CD14-positive monocyte (primary cell): ENCODE measurements at regions of chr3 and their contacts with region 1.

Region 1: DNA sequence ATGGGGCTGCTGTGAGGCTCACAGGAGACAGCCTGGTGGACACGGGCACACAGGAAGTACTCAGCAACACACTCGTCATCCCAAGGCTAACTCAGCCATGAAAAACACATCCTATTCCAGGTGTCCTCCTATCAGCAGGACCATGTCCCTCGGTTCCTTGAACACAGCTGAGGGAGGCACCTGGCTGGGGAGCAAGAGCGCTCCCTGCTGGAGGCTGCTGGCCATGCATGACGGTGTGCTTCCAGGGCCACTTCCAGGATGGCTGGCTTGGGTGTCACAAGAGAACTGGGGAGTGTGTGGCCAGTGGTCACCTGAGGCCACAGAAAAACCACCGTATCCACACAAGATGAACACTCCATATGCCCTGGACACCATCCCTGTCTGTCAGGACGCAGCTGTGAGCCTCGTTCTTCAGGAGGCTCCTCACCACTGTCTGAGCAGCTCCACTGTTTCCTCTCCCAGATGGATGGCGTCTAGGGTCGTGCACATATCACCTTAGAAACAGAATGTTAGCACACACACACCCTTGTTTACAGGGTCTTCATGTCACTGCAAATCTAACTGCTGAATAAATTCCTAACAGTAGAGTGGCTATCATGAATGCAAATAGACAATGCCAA is 31.0 kb downstream of the POC1A start:
- DNase-seq: peak; percentile 66 to 78 (median 73)
- H3K4me3 ChIP-seq: peak overlapping the region in 1 of 3 experiments; percentile 61
- H3K4me3 Mint-ChIP-seq: no peak overlapping the region
- H3K27ac ChIP-seq: peak overlapping the region in 1 of 2 donors; percentile 85
- H3K27ac Mint-ChIP-seq: peak overlapping the region in 5 of 7 donors; percentile 49 to 94 (median 82)
- H3K4me1 ChIP-seq: peaks cover 55 to 57% of the 10 kb centered on the region in 2 donors
- H3K4me1 Mint-ChIP-seq: peaks cover 57% of the 10 kb centered on the region
- H3K27me3 ChIP-seq: no peaks in the 10 kb centered on the region
- H3K27me3 Mint-ChIP-seq: no peaks in the 10 kb centered on the region
- CTCF ChIP-seq: peak; percentile 96

Region 2: GRCh38 chr3:52001443-52001974 is 121.7 kb before region 1 on chr3:
- intact Hi-C with region 1: loop called (anchors 1 to 2 kb)
- DNase-seq: peak; percentile 46 to 69 (median 61)
- H3K4me3 ChIP-seq: no peak overlapping the region
- H3K4me3 Mint-ChIP-seq: no peak overlapping the region
- H3K27ac ChIP-seq: no peak overlapping the region
- H3K27ac Mint-ChIP-seq: no peak overlapping the region
- H3K4me1 ChIP-seq: peaks cover 18 to 22% of the 10 kb centered on the region in 2 donors
- H3K4me1 Mint-ChIP-seq: peaks cover 19% of the 10 kb centered on the region
- H3K27me3 ChIP-seq: no peaks in the 10 kb centered on the region
- H3K27me3 Mint-ChIP-seq: peaks cover 2 to 7% (median 6%) of the 10 kb centered on the region in 3 donors
- CTCF ChIP-seq: peak; percentile 95

Region 3: GRCh38 chr3:52062499-52062898 is 60.7 kb before region 1 on chr3:
- intact Hi-C with region 1: loop called (anchors 2 to 5 kb)
- DNase-seq: peak; percentile 95 to 99 (median 97)
- H3K4me3 ChIP-seq: peak overlapping the region in 1 of 3 experiments; percentile 45
- H3K4me3 Mint-ChIP-seq: peak overlapping the region in 1 of 2 donors; percentile 51
- H3K27ac ChIP-seq: peak overlapping the region; percentile 83 to 84
- H3K27ac Mint-ChIP-seq: peak overlapping the region; percentile 87 to 97 (median 93)
- H3K4me1 ChIP-seq: peaks cover 50 to 59% of the 10 kb centered on the region in 2 donors
- H3K4me1 Mint-ChIP-seq: peaks cover 59% of the 10 kb centered on the region
- H3K27me3 ChIP-seq: no peaks in the 10 kb centered on the region
- H3K27me3 Mint-ChIP-seq: peaks cover 0 to 3% (median 1%) of the 10 kb centered on the region in 3 donors
- CTCF ChIP-seq: no peak

Region 4: GRCh38 chr3:52088445-52089367 is 34.5 kb before region 1 on chr3:
- intact Hi-C with region 1: loop called in 1 of 2 experiments (anchors 2 kb)
- DNase-seq: peak; percentile 84 to 95 (median 84)
- H3K4me3 ChIP-seq: no peak overlapping the region
- H3K4me3 Mint-ChIP-seq: peak overlapping the region in 1 of 2 donors; percentile 30
- H3K27ac ChIP-seq: peak overlapping the region; percentile 84 to 86
- H3K27ac Mint-ChIP-seq: peak overlapping the region; percentile 78 to 95 (median 91)
- H3K4me1 ChIP-seq: peaks cover 42 to 54% of the 10 kb centered on the region in 2 donors
- H3K4me1 Mint-ChIP-seq: peaks cover 52% of the 10 kb centered on the region
- H3K27me3 ChIP-seq: no peaks in the 10 kb centered on the region
- H3K27me3 Mint-ChIP-seq: no peaks in the 10 kb centered on the region
- CTCF ChIP-seq: no peak

Region 5: GRCh38 chr3:53150247-53151085 is 1027.2 kb after region 1 on chr3:
- intact Hi-C with region 1: no loop called
- DNase-seq: no peak
- H3K4me3 ChIP-seq: no peak overlapping the region
- H3K4me3 Mint-ChIP-seq: no peak overlapping the region
- H3K27ac ChIP-seq: no peak overlapping the region
- H3K27ac Mint-ChIP-seq: peak overlapping the region in 1 of 7 donors; percentile 14
- H3K4me1 ChIP-seq: peaks cover 32 to 48% of the 10 kb centered on the region in 2 donors
- H3K4me1 Mint-ChIP-seq: peaks cover 47% of the 10 kb centered on the region
- H3K27me3 ChIP-seq: no peaks in the 10 kb centered on the region
- H3K27me3 Mint-ChIP-seq: peaks cover 0 to 8% (median 7%) of the 10 kb centered on the region in 3 donors
- CTCF ChIP-seq: no peak